ENCODE measurements at regions of chr1 and their contacts with region 1.

Region 1: GRCh38 chr1:91876040-91876470 is 9.9 kb downstream of the TGFBR3 start:
- DNase-seq: peak; percentile 80
- ATAC-seq: peak; percentile 82
- H3K4me3 Mint-ChIP-seq: no peak overlapping the region
- H3K27ac Mint-ChIP-seq: peak overlapping the region; percentile 90
- H3K4me1 Mint-ChIP-seq: peaks cover 74% of the 10 kb centered on the region
- H3K27me3 Mint-ChIP-seq: no peaks in the 10 kb centered on the region
- CTCF ChIP-seq: no peak

Region 2: DNA sequence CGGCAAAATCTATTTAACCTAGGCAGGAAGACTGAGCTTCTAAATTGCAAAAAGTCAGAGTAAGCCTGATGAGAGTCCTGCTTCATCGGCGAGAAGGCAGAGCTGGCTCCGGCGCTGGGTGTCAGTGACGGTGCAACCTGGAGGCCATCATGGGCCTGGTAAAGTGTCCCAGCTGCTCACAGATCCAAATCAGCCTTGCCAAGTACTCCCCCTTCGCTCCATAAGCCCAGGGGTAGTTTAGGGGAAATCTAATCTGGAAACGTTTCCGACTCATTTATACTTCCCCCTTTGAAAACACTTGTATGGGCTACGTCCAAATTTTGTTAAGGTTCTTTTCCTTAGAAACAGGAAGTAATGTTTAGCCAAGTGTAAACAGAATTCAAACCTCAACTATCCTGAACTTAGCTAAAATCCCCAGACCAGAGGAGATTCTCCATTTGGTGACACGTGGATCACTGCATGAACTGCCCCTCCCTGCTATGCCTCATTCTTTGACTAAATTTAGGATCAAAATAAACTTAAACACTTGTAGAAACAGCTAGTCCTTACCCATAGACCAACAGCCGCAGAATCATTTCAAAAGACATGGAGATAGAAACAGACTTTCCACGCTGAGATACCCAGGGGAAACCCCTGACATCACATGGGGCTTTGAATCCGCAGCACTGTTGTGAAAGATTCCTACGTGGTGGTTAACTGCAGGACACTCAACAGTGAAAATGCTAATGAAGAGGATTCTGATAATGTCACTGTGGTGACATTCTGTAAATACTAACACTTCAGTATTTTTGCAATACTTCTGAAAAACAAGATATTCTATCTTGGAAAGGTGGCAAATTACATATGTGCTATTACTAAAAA is 162.8 kb before region 1 on chr1:
- CTCF ChIA-PET with region 1: no interaction called
- POLR2A ChIA-PET with region 1: no interaction called
- intact Hi-C with region 1: loop called (anchors 5 kb)
- DNase-seq: peak; percentile 74
- ATAC-seq: peak; percentile 92
- H3K4me3 Mint-ChIP-seq: peak overlapping the region; percentile 27
- H3K27ac Mint-ChIP-seq: peak overlapping the region; percentile 74
- H3K4me1 Mint-ChIP-seq: peaks cover 26% of the 10 kb centered on the region
- H3K27me3 Mint-ChIP-seq: no peaks in the 10 kb centered on the region
- CTCF ChIP-seq: no peak

Region 3: GRCh38 chr1:91803847-91804545 is 72.1 kb before region 1 on chr1:
- CTCF ChIA-PET with region 1: interaction called, 3 read pairs
- POLR2A ChIA-PET with region 1: interaction called, 4 read pairs
- intact Hi-C with region 1: loop called (anchors 2 kb)
- DNase-seq: peak; percentile 87
- ATAC-seq: peak; percentile 72
- H3K4me3 Mint-ChIP-seq: peak overlapping the region; percentile 60
- H3K27ac Mint-ChIP-seq: peak overlapping the region; percentile 93
- H3K4me1 Mint-ChIP-seq: peaks cover 46% of the 10 kb centered on the region
- H3K27me3 Mint-ChIP-seq: peaks cover 6% of the 10 kb centered on the region
- CTCF ChIP-seq: no peak

Measured in activated CD8-positive, alpha-beta T cell treated with anti-CD3 and anti-CD28 coated beads for 36 hours (primary cell).